ENCODE measurements at regions of chr18 and their contacts with region 1.

Region 1: GRCh38 chr18:42632801-42633200 is 482.7 kb downstream of the RIT2 start:
- DNase-seq: no peak
- H3K4me3 Mint-ChIP-seq: no peak overlapping the region
- H3K27ac Mint-ChIP-seq: no peak overlapping the region
- H3K4me1 Mint-ChIP-seq: no peaks in the 10 kb centered on the region
- H3K27me3 Mint-ChIP-seq: no peaks in the 10 kb centered on the region
- CTCF ChIP-seq: no peak

Region 2: GRCh38 chr18:42310956-42311355 is 321.8 kb before region 1 on chr18:
- CTCF ChIA-PET with region 1: no interaction called
- intact Hi-C with region 1: no loop called
- DNase-seq: no peak
- H3K4me3 Mint-ChIP-seq: no peak overlapping the region
- H3K27ac Mint-ChIP-seq: no peak overlapping the region
- H3K4me1 Mint-ChIP-seq: no peaks in the 10 kb centered on the region
- H3K27me3 Mint-ChIP-seq: no peaks in the 10 kb centered on the region
- CTCF ChIP-seq: no peak

Region 3: GRCh38 chr18:42606886-42607495 is 25.8 kb before region 1 on chr18:
- CTCF ChIA-PET with region 1: no interaction called
- intact Hi-C with region 1: loop called (anchors 2 kb)
- DNase-seq: no peak
- H3K4me3 Mint-ChIP-seq: no peak overlapping the region
- H3K27ac Mint-ChIP-seq: no peak overlapping the region
- H3K4me1 Mint-ChIP-seq: no peaks in the 10 kb centered on the region
- H3K27me3 Mint-ChIP-seq: no peaks in the 10 kb centered on the region
- CTCF ChIP-seq: no peak

Region 4: GRCh38 chr18:42675810-42676209 is 43.0 kb after region 1 on chr18:
- CTCF ChIA-PET with region 1: no interaction called
- intact Hi-C with region 1: no loop called
- DNase-seq: no peak
- H3K4me3 Mint-ChIP-seq: no peak overlapping the region
- H3K27ac Mint-ChIP-seq: no peak overlapping the region
- H3K4me1 Mint-ChIP-seq: no peaks in the 10 kb centered on the region
- H3K27me3 Mint-ChIP-seq: no peaks in the 10 kb centered on the region
- CTCF ChIP-seq: no peak

Region 5: DNA sequence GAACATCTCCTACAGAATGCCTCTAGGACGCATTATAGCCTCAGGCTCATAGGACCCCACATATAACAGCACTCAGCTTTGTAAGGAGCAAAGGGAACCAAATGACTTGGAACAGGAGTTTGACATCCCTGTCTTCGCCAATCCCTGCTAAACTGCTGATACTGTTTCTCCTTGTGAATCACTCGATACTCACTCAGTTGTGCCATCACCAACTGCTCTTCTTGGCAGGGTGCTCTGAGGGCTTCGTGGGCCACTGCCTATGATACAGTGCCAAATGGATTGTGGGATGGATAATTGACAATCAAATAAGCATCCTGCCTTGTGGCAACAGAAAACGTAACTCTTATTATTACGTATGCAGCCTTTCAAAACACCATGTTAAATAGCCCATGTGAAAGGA is 86.4 kb after region 1 on chr18:
- CTCF ChIA-PET with region 1: no interaction called
- intact Hi-C with region 1: no loop called
- DNase-seq: no peak
- H3K4me3 Mint-ChIP-seq: no peak overlapping the region
- H3K27ac Mint-ChIP-seq: no peak overlapping the region
- H3K4me1 Mint-ChIP-seq: no peaks in the 10 kb centered on the region
- H3K27me3 Mint-ChIP-seq: no peaks in the 10 kb centered on the region
- CTCF ChIP-seq: no peak

Measured in Calu3 (cell line).